Activated naive CD4-positive, alpha-beta T cell treated with anti-CD3 and anti-CD28 coated beads for 36 hours (primary cell): ENCODE measurements at regions of chr1 and their contacts with region 1.

Region 1: DNA sequence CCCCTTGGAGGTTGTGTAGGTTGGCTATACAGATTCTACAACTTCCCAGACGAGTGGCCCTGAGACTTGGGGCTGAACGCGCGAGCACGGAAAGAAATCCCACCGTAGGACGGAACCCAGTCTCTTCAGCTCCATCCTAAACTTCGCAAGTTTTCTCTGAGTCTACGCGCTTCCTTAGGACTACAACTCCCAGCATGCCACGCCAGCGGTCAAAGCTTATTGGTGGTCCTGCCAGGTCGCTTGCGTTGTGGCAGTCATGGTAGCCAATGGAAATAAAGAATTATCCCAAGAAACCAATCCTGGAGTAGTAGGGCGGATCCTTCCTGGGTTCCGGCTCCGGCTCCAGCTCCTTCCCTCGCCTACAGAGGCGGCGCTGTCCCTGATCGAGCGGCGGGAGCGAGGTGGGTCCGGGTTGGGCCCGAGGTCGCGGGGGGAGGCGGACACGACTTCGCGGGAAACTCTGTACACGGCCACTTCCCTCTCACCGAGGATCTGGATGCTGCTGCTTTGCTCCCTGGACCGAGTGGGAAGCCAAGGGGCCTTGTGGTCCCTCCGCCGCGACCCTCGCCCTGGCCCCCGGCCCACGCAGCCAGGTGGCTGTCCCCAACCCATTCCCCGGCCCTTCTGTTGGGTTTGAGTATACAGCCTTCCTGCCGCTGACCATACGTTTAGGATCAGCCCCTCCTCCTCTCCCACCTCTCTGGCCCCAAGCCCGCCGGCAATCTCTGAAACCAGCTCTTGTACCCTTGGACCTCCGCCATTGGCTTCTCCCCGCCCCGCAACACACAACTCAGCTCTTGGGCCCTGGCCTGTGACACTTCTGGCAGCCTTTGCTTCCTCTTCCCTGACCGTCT is at the start of gene ZNF691:
- DNase-seq: peak; percentile 95
- H3K4me3 Mint-ChIP-seq: peak within 1 kb of the TSS; percentile 82
- H3K27ac Mint-ChIP-seq: peak within 1 kb of the TSS; percentile 74
- H3K4me1 Mint-ChIP-seq: peaks cover 28% of the 10 kb centered on the region
- H3K27me3 Mint-ChIP-seq: no peaks in the 10 kb centered on the region
- total RNA-seq, gene ZNF691: 4.6 to 5.3 TPM

Region 2: DNA sequence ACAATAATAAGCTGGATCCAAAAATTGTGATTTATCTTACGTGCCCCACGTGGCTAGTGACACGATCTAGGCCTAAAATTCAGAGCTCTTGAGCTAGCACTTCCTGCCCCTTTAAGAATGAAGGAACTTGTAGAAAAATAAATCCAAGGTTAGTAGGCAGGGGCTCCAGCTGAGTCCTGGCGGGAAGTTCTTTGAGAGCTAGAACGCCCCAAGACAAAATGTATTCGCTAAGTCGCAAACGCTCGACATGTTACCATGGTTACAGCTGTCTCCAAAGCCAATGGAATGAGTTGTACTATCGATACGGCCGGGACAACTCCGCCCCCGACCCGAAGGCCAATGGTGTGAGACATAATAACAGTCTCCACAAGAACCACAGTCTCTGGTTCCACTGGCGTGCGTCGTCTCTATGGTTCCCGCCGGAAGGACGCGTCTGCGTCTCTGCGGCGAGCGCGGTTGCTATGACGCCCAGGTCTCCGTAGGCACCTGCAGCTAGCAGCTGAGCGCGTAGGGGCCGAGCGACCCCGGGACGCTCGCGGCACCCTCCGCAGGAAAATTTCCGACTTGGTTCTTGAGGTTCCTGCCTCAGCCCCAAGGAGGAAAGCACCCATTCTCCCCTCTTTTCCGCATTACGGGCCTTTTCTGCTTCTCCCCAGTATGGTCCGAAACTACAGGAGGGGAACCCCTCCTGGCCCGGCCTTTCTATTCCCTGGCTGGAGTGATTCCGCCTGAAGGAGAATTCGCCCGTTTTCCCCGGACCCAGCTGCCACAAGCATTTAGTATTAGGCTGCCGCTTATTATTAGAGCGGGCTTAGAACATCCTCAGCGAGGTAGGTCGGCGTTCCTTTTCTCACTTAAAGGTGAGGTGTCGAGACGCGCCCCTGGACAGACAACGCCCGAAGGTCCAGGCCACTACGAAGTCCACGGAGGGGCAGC is 383.4 kb before region 1 on chr1 and contains the start of gene CCDC30:
- CTCF ChIA-PET with region 1: no interaction called
- intact Hi-C with region 1: loop called (anchors 10 kb)
- DNase-seq: peak; percentile 97
- H3K4me3 Mint-ChIP-seq: peak within 1 kb of the TSS; percentile 77
- H3K27ac Mint-ChIP-seq: peak within 1 kb of the TSS; percentile 34
- H3K4me1 Mint-ChIP-seq: peaks cover 32% of the 10 kb centered on the region
- H3K27me3 Mint-ChIP-seq: no peaks in the 10 kb centered on the region
- total RNA-seq, gene CCDC30: 1.4 to 2.1 TPM

Region 3: DNA sequence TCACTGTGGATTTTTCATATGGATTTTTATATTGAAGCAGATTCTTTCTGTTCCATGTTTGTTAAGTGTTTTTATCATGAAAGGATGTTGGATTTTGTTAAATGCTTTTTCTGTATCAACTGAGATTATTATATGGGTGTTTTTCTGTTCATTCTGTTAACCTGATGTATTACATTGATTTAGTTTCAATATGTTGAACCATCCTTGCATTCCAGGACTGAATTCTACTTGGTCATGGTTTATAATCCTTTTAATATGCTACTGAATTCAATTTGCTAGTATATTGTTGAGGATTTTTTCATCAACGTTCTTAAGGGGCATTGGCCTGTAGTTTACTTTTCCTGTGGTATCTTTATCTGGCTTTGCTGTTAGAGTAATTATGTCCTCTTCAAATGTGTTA is 327.6 kb before region 1 on chr1:
- CTCF ChIA-PET with region 1: no interaction called
- intact Hi-C with region 1: no loop called
- DNase-seq: no peak
- H3K4me3 Mint-ChIP-seq: no peak overlapping the region
- H3K27ac Mint-ChIP-seq: no peak overlapping the region
- H3K4me1 Mint-ChIP-seq: no peaks in the 10 kb centered on the region
- H3K27me3 Mint-ChIP-seq: no peaks in the 10 kb centered on the region

Region 4: DNA sequence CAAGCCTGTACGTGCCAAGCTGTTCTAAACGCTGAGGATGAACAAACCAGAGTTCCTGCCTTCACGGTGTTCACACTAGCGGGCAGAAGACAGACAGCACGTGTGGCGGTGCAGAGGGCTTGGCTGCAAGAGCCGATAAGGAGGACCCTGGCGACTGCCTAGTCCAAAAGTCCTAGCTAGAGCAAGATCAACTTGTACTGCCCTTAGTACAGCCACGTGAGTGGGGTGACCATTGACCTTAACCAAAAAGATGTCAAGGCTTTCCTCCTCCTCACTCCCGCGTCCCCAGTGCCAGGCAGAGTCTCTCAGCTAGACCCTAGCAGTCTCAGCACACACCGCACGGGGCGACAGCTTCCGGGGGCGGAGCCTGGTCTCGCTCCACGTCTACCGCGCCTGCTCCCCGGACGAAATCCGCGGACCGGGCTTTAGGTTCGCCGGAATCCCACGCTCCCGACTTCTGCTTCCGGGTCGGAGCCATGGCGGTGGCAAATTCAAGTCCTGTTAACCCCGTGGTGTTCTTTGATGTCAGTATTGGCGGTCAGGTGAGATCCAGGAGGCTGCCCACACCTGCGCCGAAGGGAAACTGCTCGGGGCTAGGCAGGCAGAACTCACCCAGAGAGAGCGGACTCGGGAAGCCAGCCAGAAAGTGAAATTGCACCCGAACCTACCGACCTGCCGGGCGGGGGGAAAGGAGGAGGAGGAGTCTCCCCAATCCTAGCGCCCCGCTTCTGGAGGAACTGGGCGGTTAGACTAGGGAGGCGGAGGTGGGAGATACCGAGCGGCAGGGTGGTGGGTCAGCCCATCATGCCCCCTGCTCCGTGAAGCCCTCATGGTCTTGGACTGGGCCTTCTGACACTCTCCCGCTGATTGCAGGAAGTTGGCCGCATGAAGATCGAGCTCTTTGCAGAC is 188.3 kb before region 1 on chr1 and contains the start of gene PPIH:
- CTCF ChIA-PET with region 1: no interaction called
- intact Hi-C with region 1: loop called (anchors 2 kb)
- DNase-seq: peak; percentile 97
- H3K4me3 Mint-ChIP-seq: peak within 1 kb of the TSS; percentile 98
- H3K27ac Mint-ChIP-seq: peak within 1 kb of the TSS; percentile 94
- H3K4me1 Mint-ChIP-seq: peaks cover 36% of the 10 kb centered on the region
- H3K27me3 Mint-ChIP-seq: no peaks in the 10 kb centered on the region
- total RNA-seq, gene PPIH: 107 to 108 TPM

Region 5: GRCh38 chr1:42777852-42778251 is 68.6 kb before region 1 on chr1:
- CTCF ChIA-PET with region 1: interaction called, 10 read pairs
- intact Hi-C with region 1: no loop called
- DNase-seq: peak; percentile 61
- H3K4me3 Mint-ChIP-seq: no peak overlapping the region
- H3K27ac Mint-ChIP-seq: no peak overlapping the region
- H3K4me1 Mint-ChIP-seq: peaks cover 6% of the 10 kb centered on the region
- H3K27me3 Mint-ChIP-seq: no peaks in the 10 kb centered on the region

Region 6: DNA sequence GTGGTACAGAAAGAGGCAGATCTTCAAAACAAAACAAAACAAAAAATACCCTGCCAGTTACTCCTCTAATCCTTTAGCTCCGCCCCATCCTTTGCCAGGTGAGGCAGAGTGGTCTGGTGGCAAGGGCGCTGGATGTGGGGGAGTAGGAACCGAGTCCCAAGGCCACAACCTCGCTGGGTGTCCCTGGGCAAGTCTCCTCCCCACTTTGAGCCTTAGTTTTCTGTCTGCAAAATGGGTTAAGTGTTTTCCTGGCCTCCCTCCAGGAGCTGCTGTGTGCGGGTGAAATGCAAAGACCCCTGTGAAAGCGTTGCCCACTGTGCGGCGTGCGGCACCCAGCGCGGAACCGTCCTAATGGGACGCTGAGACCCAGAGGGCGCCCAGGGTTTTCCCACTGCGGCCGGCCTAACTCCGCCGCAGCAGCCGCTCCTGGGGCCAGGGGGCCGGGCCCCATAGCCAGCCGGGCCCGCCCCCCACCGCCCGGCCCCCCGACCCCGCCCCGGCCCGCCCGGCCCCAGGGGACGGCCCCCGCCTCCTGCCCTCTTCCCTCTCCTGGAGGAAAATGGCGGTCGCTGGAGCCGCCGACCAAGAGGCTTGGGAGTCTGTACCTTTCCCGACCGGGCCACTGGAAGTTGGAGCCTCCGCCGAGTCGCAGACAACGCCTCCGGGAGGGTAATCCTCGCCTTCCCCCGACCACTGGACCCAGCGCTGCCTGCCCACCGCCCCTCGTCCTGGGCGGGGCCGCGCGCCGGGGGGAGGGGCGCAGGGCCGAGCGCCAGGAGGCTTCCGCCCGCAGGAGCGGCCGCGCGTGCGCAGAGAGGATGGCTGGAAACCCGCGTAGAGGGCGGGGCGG is 29.7 kb before region 1 on chr1 and contains the starts of genes ERMAP and SVBP:
- CTCF ChIA-PET with region 1: interaction called, 5 read pairs
- intact Hi-C with region 1: loop called (anchors 1 kb)
- DNase-seq: peak; percentile 95
- H3K4me3 Mint-ChIP-seq: peak within 1 kb of the TSS; percentile 76
- H3K27ac Mint-ChIP-seq: peak within 1 kb of the TSS; percentile 77
- H3K4me1 Mint-ChIP-seq: peaks cover 17% of the 10 kb centered on the region
- H3K27me3 Mint-ChIP-seq: no peaks in the 10 kb centered on the region
- total RNA-seq, gene ERMAP: 3.1 TPM
- total RNA-seq, gene SVBP: 16.4 to 17.0 TPM

Region 7: DNA sequence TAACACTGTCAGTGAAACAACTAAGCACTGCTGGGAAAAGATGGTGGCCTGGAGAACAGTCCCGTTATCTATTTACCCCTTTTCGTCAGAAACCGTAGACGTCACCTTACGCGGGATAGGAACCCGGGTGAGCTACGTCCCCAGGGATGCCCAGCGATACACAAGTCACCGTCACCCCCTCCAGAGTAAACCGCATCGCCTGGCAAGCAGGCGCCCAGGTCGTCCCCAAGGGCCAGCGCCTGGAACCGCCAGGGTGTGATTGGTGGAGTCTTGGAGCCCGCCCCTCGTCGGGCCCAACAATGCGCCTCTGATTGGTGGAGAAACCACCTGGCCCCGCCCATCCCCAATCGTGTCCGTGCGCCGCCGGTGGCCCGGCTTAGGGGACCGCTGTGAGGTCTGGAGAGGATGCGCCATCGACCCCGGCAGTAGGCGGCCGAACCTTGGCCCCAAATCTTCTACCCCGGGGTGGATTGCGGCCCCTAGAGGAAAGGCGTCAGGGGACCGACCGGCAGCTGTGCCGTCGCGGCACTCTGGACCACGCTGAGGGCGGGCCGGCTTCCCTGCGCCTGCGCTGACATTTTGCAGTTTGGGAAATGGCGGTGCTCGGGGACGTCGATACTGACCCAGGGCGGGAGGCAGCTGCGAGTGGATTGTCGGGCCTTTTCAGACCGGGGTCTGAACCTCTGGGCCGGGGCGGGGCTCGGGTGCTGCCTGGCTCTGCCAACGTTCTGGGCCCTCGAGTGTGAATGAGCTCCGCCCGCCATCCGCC is 77.8 kb after region 1 on chr1:
- CTCF ChIA-PET with region 1: interaction called, 3 read pairs
- intact Hi-C with region 1: loop called (anchors 1 kb)
- DNase-seq: peak; percentile 95
- H3K4me3 Mint-ChIP-seq: peak overlapping the region; percentile 92
- H3K27ac Mint-ChIP-seq: peak overlapping the region; percentile 88
- H3K4me1 Mint-ChIP-seq: peaks cover 23% of the 10 kb centered on the region
- H3K27me3 Mint-ChIP-seq: no peaks in the 10 kb centered on the region

Region 8: GRCh38 chr1:42958488-42959319 is 112.2 kb after region 1 on chr1 and contains the start of gene SLC2A1:
- CTCF ChIA-PET with region 1: no interaction called
- intact Hi-C with region 1: loop called (anchors 5 kb)
- DNase-seq: peak; percentile 97
- H3K4me3 Mint-ChIP-seq: peak within 1 kb of the TSS; percentile 97
- H3K27ac Mint-ChIP-seq: peak within 1 kb of the TSS; percentile 96
- H3K4me1 Mint-ChIP-seq: peaks cover 45% of the 10 kb centered on the region
- H3K27me3 Mint-ChIP-seq: no peaks in the 10 kb centered on the region
- total RNA-seq, gene SLC2A1: 21.2 to 22.7 TPM